ENCODE measurements at regions of chr18 and their contacts with region 1.

Region 1: DNA sequence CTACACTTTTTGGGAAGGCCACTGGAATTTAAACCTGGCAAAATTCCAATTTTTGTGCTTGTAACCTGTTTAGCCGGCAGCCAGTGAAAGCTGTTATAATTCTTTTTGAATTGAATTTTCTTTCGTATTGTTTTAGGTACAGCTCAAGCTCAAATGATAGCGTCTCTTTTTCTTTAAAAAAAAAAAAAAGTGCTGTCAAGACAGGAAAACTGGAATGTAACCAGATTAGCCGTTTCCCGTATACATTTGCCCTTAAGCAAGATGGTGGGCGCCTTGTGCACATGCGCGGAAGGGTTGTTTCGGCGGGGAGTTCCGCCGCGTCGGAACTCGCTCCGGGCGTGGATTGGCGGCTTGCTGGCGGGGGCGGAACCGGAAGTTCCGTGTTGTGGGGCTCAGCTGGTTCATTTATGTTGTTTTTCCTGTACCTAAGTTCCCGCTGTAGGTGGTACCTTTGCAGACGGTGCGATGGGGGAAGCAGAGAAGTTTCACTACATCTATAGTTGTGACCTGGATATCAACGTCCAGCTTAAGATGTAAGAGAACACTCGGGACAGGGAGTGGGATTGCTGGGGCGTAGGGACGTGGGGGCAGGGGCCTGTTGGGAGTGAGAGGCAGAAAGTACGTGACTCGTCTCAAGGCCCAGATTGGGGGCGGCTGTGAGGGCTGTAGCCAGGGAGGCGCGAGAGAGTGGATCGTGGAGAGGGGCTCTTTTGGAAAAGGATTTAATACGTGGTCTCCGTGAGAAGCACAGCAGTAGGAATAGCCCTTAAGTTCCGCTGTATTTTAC is at the start of gene PIK3C3:
- DNase-seq: peak; percentile 97
- H3K4me3 Mint-ChIP-seq: peak within 1 kb of the TSS; percentile 100
- H3K27ac Mint-ChIP-seq: peak within 1 kb of the TSS; percentile 97
- H3K4me1 Mint-ChIP-seq: peaks cover 32% of the 10 kb centered on the region
- H3K27me3 Mint-ChIP-seq: peaks cover 2% of the 10 kb centered on the region
- total RNA-seq, gene PIK3C3: 35.3 to 35.4 TPM

Region 2: GRCh38 chr18:41967680-41968079 is 12.7 kb after region 1 on chr18:
- CTCF ChIA-PET with region 1: interaction called, 4 read pairs
- intact Hi-C with region 1: loop called (anchors 1 kb)
- DNase-seq: no peak
- H3K4me3 Mint-ChIP-seq: no peak overlapping the region
- H3K27ac Mint-ChIP-seq: no peak overlapping the region
- H3K4me1 Mint-ChIP-seq: peaks cover 34% of the 10 kb centered on the region
- H3K27me3 Mint-ChIP-seq: no peaks in the 10 kb centered on the region

Measured in activated naive CD4-positive, alpha-beta T cell treated with anti-CD3 and anti-CD28 coated beads for 36 hours (primary cell).